Natural killer cell (primary cell): ENCODE measurements at regions of chr4 and their contacts with region 1.

Region 1: DNA sequence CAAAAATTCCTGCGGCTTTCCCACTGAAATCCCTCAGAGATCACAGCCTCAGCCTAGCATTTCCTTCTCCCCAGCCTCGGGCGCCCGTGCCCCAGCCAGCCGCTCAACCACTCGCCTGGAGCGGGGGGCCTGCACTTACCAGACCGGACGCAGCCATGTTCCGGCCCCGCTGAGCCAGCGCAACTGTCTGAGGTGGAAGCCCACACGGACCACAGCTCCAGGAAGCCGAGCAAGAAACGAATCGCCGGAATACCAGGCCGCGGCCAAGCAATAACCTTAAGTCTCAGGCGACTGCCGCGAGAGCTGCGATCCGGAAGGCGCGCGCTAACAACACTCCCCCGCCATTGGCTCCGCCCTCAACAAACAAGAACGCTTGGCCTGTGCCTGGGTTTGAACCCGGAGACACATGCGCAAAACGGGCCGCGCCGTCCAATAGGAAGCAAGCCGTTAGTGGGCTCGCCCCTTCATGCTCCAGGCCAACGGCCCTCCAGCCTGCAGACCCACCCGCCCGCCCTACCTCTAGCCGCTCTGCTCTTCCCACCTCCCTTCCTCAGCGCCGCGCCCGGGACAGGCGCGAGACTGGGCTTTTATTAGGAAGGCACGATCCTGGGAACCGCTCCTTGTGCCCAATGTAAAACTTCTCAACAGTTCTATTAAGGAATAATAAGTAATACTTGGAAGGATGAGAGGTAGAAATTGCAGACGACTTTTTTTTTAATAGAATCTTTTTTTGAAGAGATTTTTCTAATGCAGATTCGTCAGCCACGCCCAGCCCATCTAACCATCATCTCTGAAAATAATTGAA is at the start of gene CENPC:
- DNase-seq: peak; percentile 84 to 95
- ATAC-seq: peak; percentile 90 to 97 (median 92)
- H3K4me3 ChIP-seq: peak within 1 kb of the TSS; percentile 88
- H3K4me3 Mint-ChIP-seq: peak within 1 kb of the TSS; percentile 100
- H3K27ac ChIP-seq: peak within 1 kb of the TSS; percentile 96
- H3K27ac Mint-ChIP-seq: peak within 1 kb of the TSS; percentile 99
- H3K4me1 ChIP-seq: peaks cover 3% of the 10 kb centered on the region
- H3K4me1 Mint-ChIP-seq: peaks cover 37 to 38% of the 10 kb centered on the region in 2 donors
- H3K27me3 ChIP-seq: no peaks in the 10 kb centered on the region
- H3K27me3 Mint-ChIP-seq: no peaks in the 10 kb centered on the region
- CTCF ChIP-seq: no peak
- total RNA-seq, gene CENPC: 78.6 to 93.6 (median 91.1) TPM

Region 2: DNA sequence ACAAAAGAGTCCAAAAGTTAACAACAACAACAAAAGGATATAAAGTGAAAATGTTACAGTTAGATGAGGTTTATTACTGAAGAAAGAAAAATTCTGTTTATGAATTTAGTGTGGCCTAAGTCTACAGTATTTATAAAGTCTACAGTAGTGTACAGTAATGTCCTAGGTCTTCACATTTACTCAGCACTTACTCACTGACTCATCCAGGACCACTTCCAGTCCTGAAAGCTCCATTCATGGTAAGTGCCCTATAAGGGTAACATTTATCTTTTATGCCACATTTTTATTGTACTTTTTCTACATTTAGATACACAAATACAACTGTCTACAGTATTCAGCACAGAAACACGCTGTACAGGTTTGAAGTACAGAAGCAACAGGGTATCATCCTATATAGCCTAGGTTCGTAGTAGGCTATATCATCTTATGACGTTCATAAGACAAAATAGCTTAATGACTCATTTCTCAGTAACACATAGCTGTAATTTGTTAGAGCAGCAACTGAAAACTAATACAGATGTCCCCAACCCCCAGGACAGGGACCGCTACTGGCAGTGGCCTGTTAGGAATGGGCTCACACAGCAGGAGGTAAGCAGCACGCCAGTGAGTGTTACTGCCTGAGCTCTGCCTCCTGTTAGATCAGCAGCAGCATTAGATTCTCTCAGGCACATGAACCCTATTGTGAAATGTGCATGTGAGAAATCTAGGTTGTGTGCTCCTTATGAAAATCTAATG is 61.4 kb before region 1 on chr4:
- intact Hi-C with region 1: no loop called
- DNase-seq: no peak
- ATAC-seq: peak in 1 of 3 donors; percentile 18
- H3K4me3 ChIP-seq: no peak overlapping the region
- H3K4me3 Mint-ChIP-seq: no peak overlapping the region
- H3K27ac ChIP-seq: no peak overlapping the region
- H3K27ac Mint-ChIP-seq: no peak overlapping the region
- H3K4me1 ChIP-seq: no peaks in the 10 kb centered on the region
- H3K4me1 Mint-ChIP-seq: peaks cover 30% of the 10 kb centered on the region in 2 donors
- H3K27me3 ChIP-seq: no peaks in the 10 kb centered on the region
- H3K27me3 Mint-ChIP-seq: no peaks in the 10 kb centered on the region
- CTCF ChIP-seq: no peak

Region 3: GRCh38 chr4:67593741-67594175 is 48.4 kb after region 1 on chr4:
- intact Hi-C with region 1: no loop called
- DNase-seq: no peak
- ATAC-seq: no peak
- H3K4me3 ChIP-seq: no peak overlapping the region
- H3K4me3 Mint-ChIP-seq: no peak overlapping the region
- H3K27ac ChIP-seq: no peak overlapping the region
- H3K27ac Mint-ChIP-seq: no peak overlapping the region
- H3K4me1 ChIP-seq: no peaks in the 10 kb centered on the region
- H3K4me1 Mint-ChIP-seq: no peaks in the 10 kb centered on the region
- H3K27me3 ChIP-seq: no peaks in the 10 kb centered on the region
- H3K27me3 Mint-ChIP-seq: no peaks in the 10 kb centered on the region
- CTCF ChIP-seq: no peak

Region 4: GRCh38 chr4:67651536-67651935 is 106.1 kb after region 1 on chr4:
- intact Hi-C with region 1: no loop called
- DNase-seq: no peak
- ATAC-seq: no peak
- H3K4me3 ChIP-seq: no peak overlapping the region
- H3K4me3 Mint-ChIP-seq: no peak overlapping the region
- H3K27ac ChIP-seq: no peak overlapping the region
- H3K27ac Mint-ChIP-seq: no peak overlapping the region
- H3K4me1 ChIP-seq: no peaks in the 10 kb centered on the region
- H3K4me1 Mint-ChIP-seq: peaks cover 5 to 22% of the 10 kb centered on the region in 2 donors
- H3K27me3 ChIP-seq: no peaks in the 10 kb centered on the region
- H3K27me3 Mint-ChIP-seq: no peaks in the 10 kb centered on the region
- CTCF ChIP-seq: no peak

Region 5: GRCh38 chr4:67700738-67701516 is 155.5 kb after region 1 on chr4 and contains the start of gene UBA6:
- intact Hi-C with region 1: loop called (anchors 1 kb)
- DNase-seq: peak; percentile 88 to 97
- ATAC-seq: peak; percentile 95 to 99 (median 97)
- H3K4me3 ChIP-seq: peak within 1 kb of the TSS; percentile 92
- H3K4me3 Mint-ChIP-seq: peak within 1 kb of the TSS; percentile 95
- H3K27ac ChIP-seq: peak within 1 kb of the TSS; percentile 84
- H3K27ac Mint-ChIP-seq: peak within 1 kb of the TSS; percentile 93 to 94
- H3K4me1 ChIP-seq: peaks cover 12% of the 10 kb centered on the region
- H3K4me1 Mint-ChIP-seq: peaks cover 43 to 47% of the 10 kb centered on the region in 2 donors
- H3K27me3 ChIP-seq: no peaks in the 10 kb centered on the region
- H3K27me3 Mint-ChIP-seq: no peaks in the 10 kb centered on the region
- CTCF ChIP-seq: peak; percentile 54
- total RNA-seq, gene UBA6: 54.3 to 77.7 (median 55.3) TPM

Region 6: DNA sequence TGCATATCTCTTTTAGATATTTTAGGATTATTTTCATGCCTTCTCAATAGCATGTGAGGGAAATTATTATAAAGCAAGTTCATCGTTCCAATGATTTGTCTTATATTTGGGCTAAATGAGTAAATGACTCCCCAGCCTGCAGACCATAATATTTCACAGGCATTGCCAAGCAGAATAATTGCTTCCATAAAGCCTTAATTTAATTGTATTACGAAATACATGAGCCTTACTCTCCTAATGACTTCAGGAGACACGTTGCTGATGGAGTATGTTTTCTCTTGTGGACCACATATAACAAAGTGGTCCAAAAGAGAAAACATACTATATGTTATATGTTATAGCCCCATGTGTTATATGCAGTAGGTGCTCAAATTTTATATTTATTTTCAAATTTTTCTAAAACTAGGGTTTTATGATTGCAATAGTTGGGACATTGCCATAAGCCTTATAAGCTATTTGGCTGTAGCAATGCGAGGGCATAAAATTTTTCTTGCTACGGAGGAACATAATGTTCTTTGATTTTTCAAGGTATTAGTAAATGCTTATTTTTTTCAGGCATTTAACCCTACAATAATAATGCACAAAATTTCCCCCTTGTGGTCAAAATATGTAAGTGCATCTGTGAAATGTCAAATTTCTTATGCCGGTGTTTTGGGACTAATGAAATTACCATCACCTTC is 364.6 kb after region 1 on chr4:
- intact Hi-C with region 1: loop called (anchors 2 kb)
- DNase-seq: peak in 1 of 2 donors; percentile 45
- ATAC-seq: no peak
- H3K4me3 ChIP-seq: no peak overlapping the region
- H3K4me3 Mint-ChIP-seq: no peak overlapping the region
- H3K27ac ChIP-seq: no peak overlapping the region
- H3K27ac Mint-ChIP-seq: no peak overlapping the region
- H3K4me1 ChIP-seq: no peaks in the 10 kb centered on the region
- H3K4me1 Mint-ChIP-seq: no peaks in the 10 kb centered on the region
- H3K27me3 ChIP-seq: no peaks in the 10 kb centered on the region
- H3K27me3 Mint-ChIP-seq: peaks cover 2 to 6% of the 10 kb centered on the region in 2 donors
- CTCF ChIP-seq: peak; percentile 82

Region 7: GRCh38 chr4:68175562-68176155 is 630.3 kb after region 1 on chr4:
- intact Hi-C with region 1: loop called (anchors 5 kb)
- DNase-seq: peak in 1 of 2 donors; percentile 55
- ATAC-seq: peak; percentile 46 to 62 (median 57)
- H3K4me3 ChIP-seq: no peak overlapping the region
- H3K4me3 Mint-ChIP-seq: no peak overlapping the region
- H3K27ac ChIP-seq: no peak overlapping the region
- H3K27ac Mint-ChIP-seq: no peak overlapping the region
- H3K4me1 ChIP-seq: no peaks in the 10 kb centered on the region
- H3K4me1 Mint-ChIP-seq: no peaks in the 10 kb centered on the region
- H3K27me3 ChIP-seq: no peaks in the 10 kb centered on the region
- H3K27me3 Mint-ChIP-seq: peaks cover 4 to 14% of the 10 kb centered on the region in 2 donors
- CTCF ChIP-seq: peak; percentile 71

Region 8: GRCh38 chr4:68349649-68350360 is 804.4 kb after region 1 on chr4 and contains the start of gene YTHDC1:
- intact Hi-C with region 1: loop called (anchors 10 kb)
- DNase-seq: peak; percentile 93 to 99
- ATAC-seq: peak; percentile 93 to 98 (median 94)
- H3K4me3 ChIP-seq: peak within 1 kb of the TSS; percentile 96
- H3K4me3 Mint-ChIP-seq: peak within 1 kb of the TSS; percentile 97
- H3K27ac ChIP-seq: peak within 1 kb of the TSS; percentile 99
- H3K27ac Mint-ChIP-seq: peak within 1 kb of the TSS; percentile 98 to 99
- H3K4me1 ChIP-seq: peaks cover 14% of the 10 kb centered on the region
- H3K4me1 Mint-ChIP-seq: peaks cover 46 to 52% of the 10 kb centered on the region in 2 donors
- H3K27me3 ChIP-seq: no peaks in the 10 kb centered on the region
- H3K27me3 Mint-ChIP-seq: peaks cover 0 to 17% of the 10 kb centered on the region in 2 donors
- CTCF ChIP-seq: no peak
- total RNA-seq, gene YTHDC1: 225 to 320 (median 270) TPM